ENCODE measurements at regions of chr1 and their contacts with region 1.

Region 1: GRCh38 chr1:185044981-185045813 is at the start of gene RNF2:
- DNase-seq: peak; percentile 72
- H3K4me3 Mint-ChIP-seq: peak within 1 kb of the TSS; percentile 91
- H3K27ac Mint-ChIP-seq: peak within 1 kb of the TSS; percentile 74
- H3K4me1 Mint-ChIP-seq: peaks cover 5% of the 10 kb centered on the region
- H3K27me3 Mint-ChIP-seq: no peaks in the 10 kb centered on the region
- CTCF ChIP-seq: peak; percentile 10
- total RNA-seq, gene RNF2: 18.6 and 19.0 TPM in 2 replicates

Region 2: GRCh38 chr1:184191181-184191621 is 854.0 kb before region 1 on chr1:
- CTCF ChIA-PET with region 1: no interaction called
- POLR2A ChIA-PET with region 1: no interaction called
- intact Hi-C with region 1: no loop called
- DNase-seq: no peak
- H3K4me3 Mint-ChIP-seq: no peak overlapping the region
- H3K27ac Mint-ChIP-seq: no peak overlapping the region
- H3K4me1 Mint-ChIP-seq: no peaks in the 10 kb centered on the region
- H3K27me3 Mint-ChIP-seq: peaks cover 45% of the 10 kb centered on the region
- CTCF ChIP-seq: no peak

Region 3: GRCh38 chr1:185033686-185034085 is 11.5 kb before region 1 on chr1:
- CTCF ChIA-PET with region 1: interaction called, 6 read pairs
- POLR2A ChIA-PET with region 1: interaction called, 22 read pairs
- intact Hi-C with region 1: no loop called
- DNase-seq: no peak
- H3K4me3 Mint-ChIP-seq: no peak overlapping the region
- H3K27ac Mint-ChIP-seq: no peak overlapping the region
- H3K4me1 Mint-ChIP-seq: no peaks in the 10 kb centered on the region
- H3K27me3 Mint-ChIP-seq: peaks cover 57% of the 10 kb centered on the region
- CTCF ChIP-seq: no peak

Region 4: DNA sequence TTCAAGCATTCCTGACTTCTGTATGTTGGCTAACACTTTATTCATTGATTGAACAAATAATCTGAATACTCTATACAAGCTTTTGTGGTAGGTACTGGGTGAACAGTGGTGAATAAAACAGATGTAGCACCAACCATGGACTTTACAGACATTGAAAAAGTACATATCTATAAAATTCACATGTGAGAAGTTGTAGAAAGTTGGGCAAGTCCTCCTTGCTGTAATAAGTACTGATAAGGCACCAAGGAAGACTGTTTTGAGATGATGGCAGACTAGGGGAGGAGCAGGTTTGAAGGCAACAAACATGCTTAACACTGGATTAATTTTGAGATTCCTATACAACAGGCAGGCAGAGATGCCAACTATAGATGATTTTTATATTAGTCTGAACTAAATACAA is 42.5 kb after region 1 on chr1:
- CTCF ChIA-PET with region 1: no interaction called
- POLR2A ChIA-PET with region 1: no interaction called
- intact Hi-C with region 1: no loop called
- DNase-seq: no peak
- H3K4me3 Mint-ChIP-seq: no peak overlapping the region
- H3K27ac Mint-ChIP-seq: no peak overlapping the region
- H3K4me1 Mint-ChIP-seq: no peaks in the 10 kb centered on the region
- H3K27me3 Mint-ChIP-seq: no peaks in the 10 kb centered on the region
- CTCF ChIP-seq: no peak

Region 5: GRCh38 chr1:185170291-185170848 is 125.2 kb after region 1 on chr1:
- CTCF ChIA-PET with region 1: interaction called, 5 read pairs
- POLR2A ChIA-PET with region 1: no interaction called
- intact Hi-C with region 1: loop called (anchors 1 kb)
- DNase-seq: peak; percentile 84
- H3K4me3 Mint-ChIP-seq: no peak overlapping the region
- H3K27ac Mint-ChIP-seq: no peak overlapping the region
- H3K4me1 Mint-ChIP-seq: no peaks in the 10 kb centered on the region
- H3K27me3 Mint-ChIP-seq: no peaks in the 10 kb centered on the region
- CTCF ChIP-seq: peak; percentile 80

Region 6: GRCh38 chr1:185439727-185440415 is 394.7 kb after region 1 on chr1:
- CTCF ChIA-PET with region 1: no interaction called
- POLR2A ChIA-PET with region 1: no interaction called
- intact Hi-C with region 1: loop called (anchors 10 kb)
- DNase-seq: peak; percentile 95
- H3K4me3 Mint-ChIP-seq: no peak overlapping the region
- H3K27ac Mint-ChIP-seq: no peak overlapping the region
- H3K4me1 Mint-ChIP-seq: peaks cover 10% of the 10 kb centered on the region
- H3K27me3 Mint-ChIP-seq: no peaks in the 10 kb centered on the region
- CTCF ChIP-seq: no peak